ENCODE measurements at regions of chr6 and their contacts with region 1.

Region 1: DNA sequence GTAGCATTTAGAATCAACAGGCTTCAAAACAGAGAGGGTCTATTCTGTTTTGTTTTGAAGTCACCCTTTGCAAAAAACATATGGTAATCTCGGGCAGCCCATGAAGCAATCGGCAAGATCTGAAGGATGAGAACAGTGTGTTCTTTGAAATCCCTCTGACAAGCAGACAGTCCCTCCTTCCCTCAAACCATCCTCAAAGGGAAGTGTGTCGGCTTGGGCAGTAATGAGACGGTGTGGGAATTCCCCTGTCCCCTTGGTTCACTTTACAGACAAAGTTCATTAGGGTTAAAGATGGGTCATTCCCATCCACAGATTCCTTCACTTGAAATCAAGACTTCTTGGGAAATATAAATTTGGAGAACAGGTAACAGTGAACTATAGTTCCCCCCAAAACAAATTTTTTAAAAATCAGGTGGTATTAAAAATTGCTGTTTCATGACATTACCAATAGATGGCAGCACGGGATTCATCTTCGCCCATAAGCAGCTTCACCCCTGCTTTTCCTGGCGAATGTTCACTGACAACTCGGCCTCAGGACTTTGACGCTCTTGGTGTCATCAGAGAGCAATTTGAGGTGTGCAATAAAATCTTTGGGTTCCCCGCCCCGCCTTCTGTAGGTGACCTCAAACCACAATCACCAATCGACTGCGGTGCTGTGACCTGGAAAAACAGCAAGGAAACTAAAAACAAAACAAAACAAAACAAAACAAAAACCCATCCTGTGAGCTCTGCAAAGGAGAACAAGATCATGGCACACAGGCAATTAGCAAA is 159.3 kb upstream of the TNFAIP3 start:
- DNase-seq: peak; percentile 85
- H3K4me3 ChIP-seq: peak overlapping the region in 1 of 4 donors; percentile 17
- H3K27ac ChIP-seq: peak overlapping the region in 2 of 4 donors; percentile 5 to 35
- H3K4me1 ChIP-seq: peaks cover 0 to 26% (median 6%) of the 10 kb centered on the region in 4 donors
- H3K27me3 ChIP-seq: no peaks in the 10 kb centered on the region
- CTCF ChIP-seq: peak; percentile 44 to 78 (median 68)
- EP300 ChIP-seq: peak in 2 of 4 donors; percentile 53 to 69
- POLR2A ChIP-seq: no peak

Region 2: GRCh38 chr6:137610702-137611101 is 97.1 kb before region 1 on chr6:
- intact Hi-C with region 1: no loop called
- DNase-seq: no peak
- H3K4me3 ChIP-seq: no peak overlapping the region
- H3K27ac ChIP-seq: no peak overlapping the region
- H3K4me1 ChIP-seq: no peaks in the 10 kb centered on the region
- H3K27me3 ChIP-seq: no peaks in the 10 kb centered on the region
- CTCF ChIP-seq: no peak
- EP300 ChIP-seq: no peak
- POLR2A ChIP-seq: no peak

Region 3: DNA sequence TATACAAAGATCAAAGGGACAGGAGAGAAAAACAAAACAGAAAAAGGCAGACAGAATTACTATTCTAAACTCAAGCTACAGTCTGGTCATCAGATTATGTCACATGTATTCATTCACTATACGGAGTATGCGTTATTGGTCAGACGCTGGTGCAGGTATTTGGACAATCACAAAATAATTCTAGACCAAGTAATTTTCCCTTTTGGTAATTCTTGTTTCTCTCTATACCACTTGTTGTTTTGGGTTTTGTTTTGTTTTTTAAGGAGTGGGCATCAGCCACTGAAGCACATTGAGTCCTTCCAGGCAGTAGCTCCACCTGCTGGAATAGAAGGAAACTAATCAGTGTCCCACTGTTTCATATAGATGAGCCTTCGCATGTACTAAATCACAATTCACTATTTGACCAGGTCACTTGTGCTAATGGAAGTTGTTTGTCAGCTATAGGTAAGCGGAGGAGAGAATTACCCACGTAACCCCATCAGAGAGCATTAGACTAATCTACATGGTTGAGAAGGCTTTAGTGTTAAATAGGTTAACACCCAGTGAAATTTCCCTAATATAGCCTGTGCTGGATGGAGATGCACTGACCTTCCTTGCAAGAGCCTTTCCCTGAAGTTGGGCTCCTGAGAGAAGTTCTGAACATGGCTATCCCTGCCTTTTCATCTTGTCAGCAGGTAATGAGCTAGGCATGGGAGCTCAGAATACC is 237.2 kb after region 1 on chr6:
- intact Hi-C with region 1: loop called (anchors 1 kb)
- DNase-seq: no peak
- H3K4me3 ChIP-seq: no peak overlapping the region
- H3K27ac ChIP-seq: no peak overlapping the region
- H3K4me1 ChIP-seq: peaks cover 0 to 12% (median 2%) of the 10 kb centered on the region in 4 donors
- H3K27me3 ChIP-seq: no peaks in the 10 kb centered on the region
- CTCF ChIP-seq: peak; percentile 51 to 77 (median 66)
- EP300 ChIP-seq: no peak
- POLR2A ChIP-seq: no peak

Region 4: DNA sequence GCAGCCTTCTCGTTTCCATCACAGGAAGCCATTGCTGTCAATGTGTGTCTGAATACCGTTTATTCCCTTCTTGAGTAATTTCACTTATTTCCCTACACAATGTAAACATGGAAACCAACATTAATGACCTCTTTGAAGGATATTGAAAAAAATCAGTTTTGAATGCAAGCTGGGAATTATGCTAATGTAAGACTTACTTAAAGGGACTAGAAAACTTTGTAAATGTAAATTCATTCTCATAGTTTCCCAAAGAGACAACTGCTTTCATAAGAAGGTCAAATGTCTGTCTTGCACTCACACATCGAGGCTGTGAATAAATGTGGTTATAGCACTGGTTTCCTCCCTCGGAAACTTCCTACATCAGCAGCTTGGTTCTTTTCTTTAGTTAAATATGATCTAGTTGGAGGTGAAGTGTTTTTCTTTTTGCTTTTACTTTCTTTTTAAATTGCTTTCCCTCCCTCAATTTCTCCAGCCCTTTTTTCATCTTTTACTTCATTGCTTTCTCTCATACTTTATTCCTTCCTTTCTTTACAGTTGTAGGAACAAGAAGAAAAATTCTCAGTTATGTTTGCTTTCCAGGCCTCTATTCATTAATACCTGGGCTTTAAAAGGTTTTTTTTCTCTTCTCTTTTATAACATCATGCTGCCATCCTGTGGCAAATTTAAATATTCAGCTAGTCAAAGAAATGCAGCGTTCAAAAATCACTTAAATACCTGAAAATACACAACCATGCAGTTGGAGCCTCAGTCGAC is 267.6 kb after region 1 on chr6:
- intact Hi-C with region 1: loop called (anchors 10 kb)
- DNase-seq: no peak
- H3K4me3 ChIP-seq: no peak overlapping the region
- H3K27ac ChIP-seq: no peak overlapping the region
- H3K4me1 ChIP-seq: no peaks in the 10 kb centered on the region
- H3K27me3 ChIP-seq: no peaks in the 10 kb centered on the region
- CTCF ChIP-seq: peak in 1 of 4 experiments; percentile 23
- EP300 ChIP-seq: no peak
- POLR2A ChIP-seq: no peak

Region 5: DNA sequence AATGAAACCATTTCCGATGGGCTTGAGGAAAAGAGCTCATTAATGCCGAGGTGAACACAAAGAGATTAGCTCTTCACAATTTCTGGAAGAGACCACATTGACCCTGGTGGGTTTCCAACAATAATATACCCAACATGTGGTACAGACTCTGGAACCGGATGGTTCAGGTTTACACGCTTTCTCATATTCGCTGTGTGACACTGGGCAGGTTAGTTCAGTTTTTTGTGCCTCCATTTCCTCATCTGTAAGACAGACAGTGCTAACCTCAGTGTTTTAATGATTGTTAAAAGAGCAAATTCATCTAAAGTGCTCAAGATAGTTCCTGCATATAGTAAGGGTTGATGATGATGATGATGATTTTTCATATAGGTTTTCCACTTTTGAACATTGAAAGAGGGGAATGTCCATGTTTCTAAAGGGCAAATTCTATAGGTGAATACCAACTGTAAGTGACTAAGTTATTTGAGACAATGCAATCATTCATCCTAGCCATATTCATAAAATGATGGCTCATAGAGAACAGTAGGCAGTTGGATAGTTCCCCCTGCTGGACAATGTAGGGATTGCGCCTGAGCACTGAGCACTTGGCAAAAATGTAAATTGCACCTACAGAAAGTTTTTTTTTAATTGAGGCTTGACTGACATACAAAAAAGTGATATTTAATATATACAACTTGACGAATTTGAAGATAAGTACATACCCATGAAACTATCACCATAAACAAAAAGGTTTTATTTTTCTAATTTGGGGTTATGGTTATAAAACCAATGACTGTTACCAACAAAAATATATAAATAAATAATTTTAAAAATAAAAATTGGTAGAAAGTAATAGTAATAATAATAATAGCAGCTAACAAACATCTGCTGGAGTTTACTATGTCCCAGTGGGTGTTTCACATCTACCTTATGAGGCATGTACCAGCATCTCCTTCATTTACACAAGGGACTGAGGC is 401.5 kb after region 1 on chr6:
- intact Hi-C with region 1: loop called (anchors 5 kb)
- DNase-seq: peak; percentile 80
- H3K4me3 ChIP-seq: no peak overlapping the region
- H3K27ac ChIP-seq: peak overlapping the region; percentile 82 to 92 (median 88)
- H3K4me1 ChIP-seq: peaks cover 0 to 31% (median 24%) of the 10 kb centered on the region in 4 donors
- H3K27me3 ChIP-seq: no peaks in the 10 kb centered on the region
- CTCF ChIP-seq: peak; percentile 90 to 97 (median 94)
- EP300 ChIP-seq: no peak
- POLR2A ChIP-seq: no peak

Measured in sigmoid colon (tissue), 7 donors.